ENCODE measurements at regions of chr3 and their contacts with region 1.

Region 1: DNA sequence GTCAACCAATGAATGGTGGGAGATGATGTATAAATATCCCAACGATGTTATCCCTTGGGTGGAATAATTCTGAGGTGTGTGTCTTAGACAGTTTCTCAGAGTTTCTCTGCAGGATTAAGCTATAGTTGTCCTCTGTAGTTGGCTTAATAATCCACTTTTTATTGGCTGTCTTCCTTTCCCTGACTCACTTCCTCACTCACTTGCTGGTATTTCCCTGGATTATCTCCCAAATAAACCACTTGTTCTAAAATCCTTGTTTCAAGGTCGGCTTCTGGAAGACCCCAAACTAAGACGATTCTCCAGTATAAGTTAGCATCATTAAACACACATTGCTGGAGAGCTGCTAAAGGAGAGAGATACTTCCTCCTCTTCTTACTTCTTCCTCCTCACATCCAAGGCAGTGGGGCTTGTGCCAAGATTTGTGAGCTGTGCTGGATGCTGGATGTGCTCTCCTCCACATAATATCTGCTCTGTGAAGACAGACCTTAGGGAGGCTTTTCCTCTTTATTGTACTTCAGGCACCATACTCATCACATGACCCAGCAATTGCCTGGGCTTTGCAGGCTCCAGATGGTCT is 22.5 kb upstream of the ROPN1 start:
- DNase-seq: no peak
- H3K4me3 ChIP-seq: no peak overlapping the region
- H3K27ac ChIP-seq: no peak overlapping the region
- H3K4me1 ChIP-seq: no peaks in the 10 kb centered on the region
- H3K27me3 ChIP-seq: peaks cover 5% of the 10 kb centered on the region
- CTCF ChIP-seq: no peak

Region 2: DNA sequence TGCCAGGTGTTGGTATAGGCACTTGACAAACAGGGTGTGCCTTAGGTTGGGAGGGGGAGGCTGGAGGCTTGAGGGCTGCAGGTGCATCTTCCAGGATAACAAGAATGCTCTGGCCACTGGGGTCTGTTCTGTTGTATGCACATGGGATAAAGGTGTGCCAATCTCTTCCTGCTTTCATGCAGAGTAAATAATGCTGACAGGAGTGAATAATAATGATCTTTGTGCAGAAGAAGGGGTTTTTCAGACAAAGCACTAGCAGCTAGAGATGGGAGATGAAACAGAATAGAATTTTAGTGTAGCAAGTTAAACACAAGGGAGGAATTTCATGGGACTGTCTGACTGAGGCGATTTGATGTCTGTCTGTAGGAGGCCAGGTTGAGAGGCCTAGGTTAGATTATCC is 20.6 kb before region 1 on chr3:
- CTCF ChIA-PET with region 1: no interaction called
- dilution Hi-C with region 1: no loop called
- in situ Hi-C with region 1: no loop called
- intact Hi-C with region 1: no loop called
- DNase-seq: no peak
- H3K4me3 ChIP-seq: no peak overlapping the region
- H3K27ac ChIP-seq: no peak overlapping the region
- H3K4me1 ChIP-seq: no peaks in the 10 kb centered on the region
- H3K27me3 ChIP-seq: peaks cover 7% of the 10 kb centered on the region
- CTCF ChIP-seq: no peak

Region 3: GRCh38 chr3:124351430-124352148 is 337.1 kb after region 1 on chr3:
- CTCF ChIA-PET with region 1: no interaction called
- dilution Hi-C with region 1: no loop called
- in situ Hi-C with region 1: no loop called
- intact Hi-C with region 1: loop called (anchors 5 kb)
- DNase-seq: peak; percentile 28
- H3K4me3 ChIP-seq: no peak overlapping the region
- H3K27ac ChIP-seq: no peak overlapping the region
- H3K4me1 ChIP-seq: no peaks in the 10 kb centered on the region
- H3K27me3 ChIP-seq: peaks cover 2% of the 10 kb centered on the region
- CTCF ChIP-seq: peak; percentile 37 to 70